ENCODE measurements at regions of chr10 and their contacts with region 1.

Region 1: GRCh38 chr10:92290837-92291615 is at the starts of genes CPEB3 and MARCHF5:
- DNase-seq: peak; percentile 96
- H3K4me3 Mint-ChIP-seq: peak within 1 kb of the TSS; percentile 83
- H3K27ac Mint-ChIP-seq: peak within 1 kb of the TSS; percentile 79
- H3K4me1 Mint-ChIP-seq: peaks cover 21% of the 10 kb centered on the region
- H3K27me3 Mint-ChIP-seq: no peaks in the 10 kb centered on the region
- total RNA-seq, gene CPEB3: 1.4 to 1.6 TPM
- total RNA-seq, gene MARCHF5: 27.4 to 29.1 TPM

Region 2: DNA sequence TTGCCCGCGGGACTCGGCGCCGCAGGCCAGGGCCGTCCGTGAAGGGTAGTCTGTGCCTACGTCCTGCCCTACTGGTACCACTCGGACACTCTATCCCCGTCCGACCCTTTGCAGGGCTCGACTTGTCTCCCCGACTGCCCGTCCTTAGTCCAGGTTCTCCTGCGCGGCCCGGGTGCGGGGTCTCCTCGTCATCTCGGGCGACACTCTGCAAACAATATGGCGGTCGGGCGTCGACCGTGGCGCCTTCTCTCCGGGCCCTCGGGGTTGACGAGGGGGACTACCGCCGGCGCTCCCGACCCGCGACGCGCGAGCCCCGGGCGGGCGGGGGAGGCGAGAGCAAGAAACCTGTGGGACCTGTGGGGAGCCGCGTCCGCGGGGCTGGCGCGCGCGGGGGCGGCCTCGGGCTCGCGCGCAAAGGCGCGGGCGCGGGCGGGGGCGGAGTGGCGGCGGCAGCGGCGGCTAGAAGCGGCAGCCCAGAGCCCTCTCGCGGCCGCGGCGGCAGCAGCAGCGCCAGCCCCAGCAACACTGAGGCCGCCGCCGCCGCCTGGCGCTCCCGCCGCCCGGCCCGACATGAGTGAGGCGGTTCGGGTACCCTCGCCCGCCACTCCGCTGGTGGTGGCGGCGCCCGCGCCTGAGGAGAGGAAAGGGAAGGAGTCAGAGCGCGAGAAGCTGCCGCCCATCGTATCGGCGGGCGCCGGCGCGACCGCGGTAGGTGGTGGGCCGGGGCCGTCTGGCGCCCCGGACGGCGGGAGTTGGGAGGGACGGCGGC is 881.0 kb before region 1 on chr10 and contains the start of gene HECTD2:
- CTCF ChIA-PET with region 1: no interaction called
- POLR2A ChIA-PET with region 1: no interaction called
- intact Hi-C with region 1: loop called (anchors 2 kb)
- DNase-seq: peak; percentile 82
- H3K4me3 Mint-ChIP-seq: peak within 1 kb of the TSS; percentile 79
- H3K27ac Mint-ChIP-seq: peak within 1 kb of the TSS; percentile 83
- H3K4me1 Mint-ChIP-seq: peaks cover 13% of the 10 kb centered on the region
- H3K27me3 Mint-ChIP-seq: no peaks in the 10 kb centered on the region
- total RNA-seq, gene HECTD2: 4.0 to 5.5 TPM

Region 3: DNA sequence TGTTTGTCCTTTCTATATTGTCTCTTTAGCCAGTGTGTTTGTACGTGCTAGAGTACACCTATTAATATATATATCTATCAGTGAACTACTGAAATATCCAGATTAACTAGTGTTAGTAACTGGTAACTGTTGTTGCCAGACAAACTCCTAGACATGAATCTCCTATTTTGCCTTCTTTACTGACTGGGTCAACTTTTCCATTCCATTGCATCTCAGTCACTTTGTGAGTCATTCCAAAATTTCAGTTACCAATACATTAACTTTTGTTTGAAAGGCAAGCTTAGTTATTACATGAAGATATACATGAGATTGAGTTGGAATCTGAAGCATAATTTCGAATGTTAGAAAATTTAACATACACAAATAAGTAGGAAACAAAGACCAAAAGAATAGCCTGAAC is 316.1 kb before region 1 on chr10:
- CTCF ChIA-PET with region 1: no interaction called
- POLR2A ChIA-PET with region 1: no interaction called
- intact Hi-C with region 1: loop called (anchors 1 kb)
- DNase-seq: no peak
- H3K4me3 Mint-ChIP-seq: no peak overlapping the region
- H3K27ac Mint-ChIP-seq: peak overlapping the region; percentile 25
- H3K4me1 Mint-ChIP-seq: peaks cover 33% of the 10 kb centered on the region
- H3K27me3 Mint-ChIP-seq: no peaks in the 10 kb centered on the region

Region 4: DNA sequence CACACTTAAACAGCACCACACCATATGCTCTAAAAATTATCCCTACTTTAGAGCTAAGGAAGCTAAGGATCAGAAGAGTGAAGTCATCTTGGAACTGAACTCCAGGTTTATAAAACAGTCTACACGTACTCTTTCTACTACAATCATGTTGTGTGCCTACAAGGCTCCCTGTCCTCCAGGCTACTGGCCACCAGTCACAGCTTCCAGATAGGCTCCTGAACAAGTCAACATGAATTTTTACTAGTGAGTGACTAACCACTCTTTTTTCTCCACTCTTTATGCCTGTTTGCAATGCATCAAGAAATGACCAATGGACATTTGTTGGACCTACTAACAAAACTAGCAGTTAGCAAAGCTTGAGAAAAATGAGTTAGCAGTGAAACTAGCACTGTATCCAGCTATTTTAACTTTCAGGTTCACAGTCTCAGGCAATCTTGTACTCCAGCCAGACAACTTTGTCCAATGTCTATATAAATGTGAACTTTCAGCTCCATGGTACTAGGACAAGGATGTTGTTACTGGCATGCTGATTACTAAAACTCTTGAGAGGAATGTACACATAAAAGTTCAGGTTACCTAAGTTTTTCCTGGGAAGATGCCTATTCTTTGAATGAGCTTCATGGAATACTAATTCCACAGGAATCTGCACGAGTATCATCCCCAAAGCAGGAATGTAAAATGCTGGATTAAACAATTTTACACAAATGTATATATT is 187.5 kb before region 1 on chr10:
- CTCF ChIA-PET with region 1: interaction called, 22 read pairs
- POLR2A ChIA-PET with region 1: interaction called, 6 read pairs
- intact Hi-C with region 1: loop called (anchors 1 kb)
- DNase-seq: no peak
- H3K4me3 Mint-ChIP-seq: no peak overlapping the region
- H3K27ac Mint-ChIP-seq: no peak overlapping the region
- H3K4me1 Mint-ChIP-seq: peaks cover 17% of the 10 kb centered on the region
- H3K27me3 Mint-ChIP-seq: no peaks in the 10 kb centered on the region

Region 5: DNA sequence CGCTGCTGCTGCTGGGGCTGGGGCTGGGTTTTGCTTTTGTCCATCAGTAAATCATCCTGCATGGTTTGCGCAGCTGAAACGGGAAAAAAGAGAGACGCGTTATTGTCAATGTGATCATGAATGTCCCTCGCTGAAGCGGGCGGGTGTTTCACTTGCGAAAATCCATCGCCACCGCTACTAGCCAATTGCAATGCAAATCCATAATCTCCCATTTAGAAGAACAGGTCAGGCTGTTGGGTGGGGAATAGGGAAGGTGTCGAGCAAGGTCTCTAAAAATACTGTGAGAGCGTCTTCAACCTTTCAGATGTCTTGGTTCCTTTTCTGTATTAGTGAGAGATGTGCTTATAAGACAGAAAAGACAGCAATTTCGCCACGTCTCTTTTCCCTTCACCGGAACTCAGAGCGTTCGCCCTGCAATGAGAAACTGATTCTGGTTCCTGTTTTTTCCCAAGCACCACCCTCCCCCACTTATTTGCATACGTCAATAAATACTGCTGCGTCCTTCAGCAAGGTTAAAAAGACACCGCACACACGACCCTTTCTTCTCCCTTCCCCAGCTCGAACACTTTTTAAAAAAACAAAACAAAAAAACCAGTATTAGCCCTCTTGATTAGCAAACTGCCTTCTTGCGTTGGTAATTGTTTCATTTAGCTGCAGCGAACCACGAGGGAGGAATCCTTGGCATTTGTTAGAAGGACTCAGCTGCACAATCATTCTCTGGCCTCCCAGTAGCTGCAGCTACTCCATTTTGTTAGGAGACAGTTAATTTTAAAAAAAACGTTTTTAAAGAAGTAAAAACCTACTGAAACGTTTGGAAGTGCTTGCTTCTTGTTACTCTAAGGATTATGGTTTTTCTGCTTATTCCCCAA is 50.5 kb before region 1 on chr10:
- CTCF ChIA-PET with region 1: interaction called, 4 read pairs
- POLR2A ChIA-PET with region 1: no interaction called
- intact Hi-C with region 1: loop called (anchors 1 kb)
- DNase-seq: peak; percentile 38
- H3K4me3 Mint-ChIP-seq: peak overlapping the region; percentile 72
- H3K27ac Mint-ChIP-seq: no peak overlapping the region
- H3K4me1 Mint-ChIP-seq: peaks cover 33% of the 10 kb centered on the region
- H3K27me3 Mint-ChIP-seq: peaks cover 9% of the 10 kb centered on the region

Region 6: GRCh38 chr10:92573798-92574547 is 282.9 kb after region 1 on chr10 and contains the start of gene IDE:
- CTCF ChIA-PET with region 1: interaction called, 6 read pairs
- POLR2A ChIA-PET with region 1: interaction called, 5 read pairs
- intact Hi-C with region 1: loop called (anchors 2 kb)
- DNase-seq: peak; percentile 90
- H3K4me3 Mint-ChIP-seq: peak within 1 kb of the TSS; percentile 56
- H3K27ac Mint-ChIP-seq: peak within 1 kb of the TSS; percentile 85
- H3K4me1 Mint-ChIP-seq: peaks cover 34% of the 10 kb centered on the region
- H3K27me3 Mint-ChIP-seq: no peaks in the 10 kb centered on the region
- total RNA-seq, gene IDE: 32.3 to 40.1 TPM